ENCODE measurements at regions of chr4 and their contacts with region 1.

Region 1: GRCh38 chr4:122732329-122733026 is at the start of gene BBS12:
- DNase-seq: peak; percentile 94
- ATAC-seq: peak; percentile 99
- H3K4me3 Mint-ChIP-seq: peak within 1 kb of the TSS; percentile 92
- H3K27ac Mint-ChIP-seq: peak within 1 kb of the TSS; percentile 85
- H3K4me1 Mint-ChIP-seq: peaks cover 3% of the 10 kb centered on the region
- H3K27me3 Mint-ChIP-seq: no peaks in the 10 kb centered on the region
- total RNA-seq, gene BBS12: 1.7 to 2.7 TPM

Region 2: DNA sequence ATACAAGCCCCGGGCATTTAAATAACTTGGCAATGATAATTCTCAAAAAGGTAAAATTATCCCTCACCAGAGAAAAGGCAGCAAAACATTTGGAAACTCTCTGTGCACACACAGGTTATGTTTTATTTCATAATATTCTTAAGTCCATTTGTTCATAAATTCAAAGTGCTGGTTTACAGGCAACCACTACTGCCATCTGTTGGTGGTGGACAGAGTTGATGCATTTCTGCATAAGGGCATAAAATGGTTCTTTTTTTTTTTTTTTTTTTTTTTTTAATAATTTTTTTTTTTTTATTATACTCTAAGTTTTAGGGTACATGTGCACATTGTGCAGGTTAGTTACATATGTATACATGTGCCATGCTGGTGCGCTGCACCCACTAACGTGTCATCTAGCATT is 80.1 kb before region 1 on chr4:
- POLR2A ChIA-PET with region 1: no interaction called
- DNase-seq: no peak
- ATAC-seq: no peak
- H3K4me3 Mint-ChIP-seq: no peak overlapping the region
- H3K27ac Mint-ChIP-seq: no peak overlapping the region
- H3K4me1 Mint-ChIP-seq: peaks cover 1% of the 10 kb centered on the region
- H3K27me3 Mint-ChIP-seq: no peaks in the 10 kb centered on the region

Region 3: DNA sequence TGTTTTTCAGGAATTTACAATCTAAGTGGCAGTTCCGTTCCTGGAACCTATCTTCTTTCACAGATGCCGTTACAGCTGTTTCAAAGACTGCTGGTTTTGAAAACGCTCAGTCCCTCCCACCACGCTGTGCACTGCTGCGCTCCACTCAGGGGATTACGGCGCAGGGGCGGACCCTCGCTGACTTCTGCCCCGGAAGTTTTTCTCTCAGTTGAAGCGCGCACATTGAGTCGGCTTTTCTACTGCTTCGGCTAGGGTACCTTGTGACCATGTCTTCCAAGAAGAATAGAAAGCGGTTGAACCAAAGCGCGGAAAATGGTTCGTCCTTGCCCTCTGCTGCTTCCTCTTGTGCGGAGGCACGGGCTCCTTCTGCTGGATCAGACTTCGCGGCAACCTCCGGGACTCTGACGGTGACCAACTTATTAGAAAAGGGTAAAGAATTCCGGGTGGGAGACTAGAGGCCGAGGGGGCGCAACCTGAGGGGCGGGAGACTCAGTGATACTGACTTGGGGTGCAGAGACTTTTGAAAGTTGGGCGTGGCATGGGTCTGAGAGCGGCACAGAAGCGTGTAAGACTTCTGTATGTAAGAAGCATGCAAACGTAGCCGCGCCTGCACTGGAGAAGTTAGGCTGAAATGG is 190.5 kb after region 1 on chr4:
- POLR2A ChIA-PET with region 1: interaction called, 15 read pairs
- DNase-seq: peak; percentile 83
- ATAC-seq: peak; percentile 96
- H3K4me3 Mint-ChIP-seq: no peak overlapping the region
- H3K27ac Mint-ChIP-seq: peak overlapping the region; percentile 98
- H3K4me1 Mint-ChIP-seq: peaks cover 18% of the 10 kb centered on the region
- H3K27me3 Mint-ChIP-seq: no peaks in the 10 kb centered on the region